ENCODE measurements at regions of chr18 and their contacts with region 1.

Region 1: DNA sequence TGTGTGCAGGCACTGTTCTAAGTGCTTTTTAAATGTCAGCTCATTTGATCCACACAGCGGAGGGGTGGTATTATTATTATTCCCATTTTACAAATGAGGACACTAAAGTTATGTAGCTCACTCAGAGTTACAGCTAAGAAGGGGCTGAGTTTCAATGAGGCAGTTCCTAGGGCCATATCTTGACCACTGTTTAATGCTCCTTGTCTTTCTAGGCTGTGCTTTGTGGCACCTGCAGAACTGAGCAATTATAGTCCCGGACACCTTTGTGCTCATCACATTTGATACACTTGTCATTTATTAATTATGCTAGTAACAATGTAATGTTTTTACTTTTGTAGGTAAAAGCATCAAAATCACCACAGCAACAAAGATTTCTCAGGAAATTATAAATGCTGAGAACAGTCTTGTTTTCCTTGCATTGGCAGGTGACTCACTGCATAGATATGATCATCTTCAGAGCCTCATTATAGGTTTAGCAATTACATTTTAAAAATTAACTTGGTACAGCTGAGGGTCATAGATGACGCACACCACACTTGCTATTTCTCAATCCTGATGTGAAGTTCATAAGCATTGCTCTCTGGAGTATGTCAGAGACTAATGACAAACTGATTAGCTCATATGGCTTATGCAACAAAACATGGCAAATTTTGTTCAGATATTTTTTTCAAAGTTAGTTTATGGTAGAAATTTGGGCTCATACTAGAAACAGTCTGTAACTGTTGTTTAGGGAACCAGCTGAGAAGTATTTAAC is 366.8 kb downstream of the TGIF1 start:
- DNase-seq: peak; percentile 92
- H3K4me3 ChIP-seq: no peak overlapping the region
- H3K27ac ChIP-seq: peak overlapping the region; percentile 80
- H3K4me1 ChIP-seq: peaks cover 13% of the 10 kb centered on the region
- H3K27me3 ChIP-seq: no peaks in the 10 kb centered on the region
- CTCF ChIP-seq: no peak

Region 2: GRCh38 chr18:3771121-3771971 is 45.4 kb before region 1 on chr18:
- CTCF ChIA-PET with region 1: interaction called, 7 read pairs
- dilution Hi-C with region 1: no loop called
- in situ Hi-C with region 1: loop called in 1 of 2 experiments (anchors 5 kb)
- intact Hi-C with region 1: loop called (anchors 2 kb)
- DNase-seq: peak; percentile 83
- H3K4me3 ChIP-seq: peak overlapping the region in 2 of 3 experiments; percentile 27 to 39
- H3K27ac ChIP-seq: peak overlapping the region; percentile 47
- H3K4me1 ChIP-seq: peaks cover 5% of the 10 kb centered on the region
- H3K27me3 ChIP-seq: no peaks in the 10 kb centered on the region
- CTCF ChIP-seq: peak; percentile 67 to 93

Region 3: DNA sequence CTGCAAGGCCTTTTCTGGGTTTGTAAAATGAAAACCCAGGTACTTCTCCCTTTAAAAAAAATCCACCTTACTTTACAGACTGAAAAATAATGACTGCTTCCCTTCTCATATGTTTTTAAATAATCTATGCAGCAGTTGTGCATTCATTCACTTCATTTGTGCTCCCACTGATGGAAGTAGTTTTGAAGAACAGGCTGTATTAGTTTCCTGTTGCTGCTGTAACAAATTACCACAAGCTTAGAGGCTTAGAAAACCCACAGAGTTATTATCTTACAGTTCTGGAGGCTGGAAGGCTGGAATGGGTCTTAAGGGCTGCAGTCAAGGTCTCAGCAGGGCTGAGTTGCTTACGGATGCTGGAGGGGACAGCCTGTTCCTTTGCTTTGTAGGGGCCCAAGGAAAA is 31.8 kb before region 1 on chr18:
- CTCF ChIA-PET with region 1: no interaction called
- dilution Hi-C with region 1: loop called (anchors 5 kb)
- in situ Hi-C with region 1: no loop called
- intact Hi-C with region 1: no loop called
- DNase-seq: no peak
- H3K4me3 ChIP-seq: no peak overlapping the region
- H3K27ac ChIP-seq: no peak overlapping the region
- H3K4me1 ChIP-seq: peaks cover 5% of the 10 kb centered on the region
- H3K27me3 ChIP-seq: no peaks in the 10 kb centered on the region
- CTCF ChIP-seq: no peak

Region 4: GRCh38 chr18:3852321-3852720 is 35.5 kb after region 1 on chr18:
- CTCF ChIA-PET with region 1: no interaction called
- dilution Hi-C with region 1: loop called (anchors 5 kb)
- in situ Hi-C with region 1: no loop called
- intact Hi-C with region 1: loop called (anchors 5 kb)
- DNase-seq: no peak
- H3K4me3 ChIP-seq: no peak overlapping the region
- H3K27ac ChIP-seq: no peak overlapping the region
- H3K4me1 ChIP-seq: no peaks in the 10 kb centered on the region
- H3K27me3 ChIP-seq: no peaks in the 10 kb centered on the region
- CTCF ChIP-seq: no peak

Region 5: DNA sequence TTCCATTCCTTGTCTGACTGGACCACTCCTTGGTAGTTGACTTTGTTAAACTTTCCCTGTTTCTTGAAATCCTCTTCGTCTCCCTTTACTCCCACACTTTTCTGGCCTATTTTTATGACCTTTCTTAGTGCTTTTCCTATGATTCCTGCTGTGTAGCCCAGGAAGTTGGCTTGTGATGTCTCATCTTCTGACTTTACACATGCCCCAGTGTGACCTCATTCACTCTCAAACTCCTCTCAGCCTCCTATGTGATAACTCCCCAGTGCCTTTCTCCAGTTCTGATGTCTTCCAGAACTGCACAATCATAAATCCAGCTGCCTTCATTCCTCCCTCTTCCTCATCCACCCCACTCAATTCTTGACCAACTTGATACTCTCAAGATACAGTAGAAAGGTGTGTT is 40.8 kb after region 1 on chr18:
- CTCF ChIA-PET with region 1: no interaction called
- dilution Hi-C with region 1: loop called (anchors 5 kb)
- in situ Hi-C with region 1: no loop called
- intact Hi-C with region 1: loop called (anchors 5 kb)
- DNase-seq: no peak
- H3K4me3 ChIP-seq: no peak overlapping the region
- H3K27ac ChIP-seq: no peak overlapping the region
- H3K4me1 ChIP-seq: no peaks in the 10 kb centered on the region
- H3K27me3 ChIP-seq: no peaks in the 10 kb centered on the region
- CTCF ChIP-seq: no peak